ENCODE measurements at regions of chr3 and their contacts with region 1.

Region 1: DNA sequence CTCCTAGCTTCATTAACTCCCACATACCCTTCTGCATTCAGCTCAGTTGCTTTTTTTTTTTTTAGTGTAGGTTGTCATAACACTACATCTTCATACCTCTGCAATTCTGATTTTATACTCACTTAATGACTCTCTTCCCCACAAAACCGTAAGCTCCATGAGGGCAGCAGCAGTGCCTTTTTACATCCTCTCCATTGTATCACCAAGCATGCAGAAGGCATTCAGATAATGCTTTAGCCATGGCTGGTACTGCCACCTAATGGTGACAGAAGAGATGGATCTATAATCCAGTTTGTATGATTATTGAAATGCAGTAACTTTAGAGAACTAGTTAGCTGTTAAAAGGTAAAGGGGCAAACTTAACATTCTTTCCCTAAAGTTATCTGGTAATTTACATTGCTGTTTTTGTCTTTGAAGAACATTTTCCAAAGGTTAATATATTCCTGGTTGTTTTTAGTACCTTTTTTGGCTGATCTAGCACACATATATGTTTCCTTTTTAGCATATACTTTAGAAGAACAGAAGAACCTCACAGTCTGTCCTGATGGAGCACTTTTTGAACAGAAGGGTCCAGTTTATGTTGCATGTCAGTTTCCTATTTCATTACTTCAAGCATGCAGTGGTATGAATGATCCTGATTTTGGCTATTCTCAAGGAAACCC is 36.8 kb downstream of the ATP1B3 start:
- DNase-seq: peak in 6 of 7 donors; percentile 35 to 75 (median 59)
- H3K4me3 ChIP-seq: no peak overlapping the region
- H3K27ac ChIP-seq: no peak overlapping the region
- H3K4me1 ChIP-seq: no peaks in the 10 kb centered on the region
- H3K27me3 ChIP-seq: no peaks in the 10 kb centered on the region
- CTCF ChIP-seq: peak; percentile 51 to 82 (median 76)
- POLR2A ChIP-seq: no peak

Region 2: DNA sequence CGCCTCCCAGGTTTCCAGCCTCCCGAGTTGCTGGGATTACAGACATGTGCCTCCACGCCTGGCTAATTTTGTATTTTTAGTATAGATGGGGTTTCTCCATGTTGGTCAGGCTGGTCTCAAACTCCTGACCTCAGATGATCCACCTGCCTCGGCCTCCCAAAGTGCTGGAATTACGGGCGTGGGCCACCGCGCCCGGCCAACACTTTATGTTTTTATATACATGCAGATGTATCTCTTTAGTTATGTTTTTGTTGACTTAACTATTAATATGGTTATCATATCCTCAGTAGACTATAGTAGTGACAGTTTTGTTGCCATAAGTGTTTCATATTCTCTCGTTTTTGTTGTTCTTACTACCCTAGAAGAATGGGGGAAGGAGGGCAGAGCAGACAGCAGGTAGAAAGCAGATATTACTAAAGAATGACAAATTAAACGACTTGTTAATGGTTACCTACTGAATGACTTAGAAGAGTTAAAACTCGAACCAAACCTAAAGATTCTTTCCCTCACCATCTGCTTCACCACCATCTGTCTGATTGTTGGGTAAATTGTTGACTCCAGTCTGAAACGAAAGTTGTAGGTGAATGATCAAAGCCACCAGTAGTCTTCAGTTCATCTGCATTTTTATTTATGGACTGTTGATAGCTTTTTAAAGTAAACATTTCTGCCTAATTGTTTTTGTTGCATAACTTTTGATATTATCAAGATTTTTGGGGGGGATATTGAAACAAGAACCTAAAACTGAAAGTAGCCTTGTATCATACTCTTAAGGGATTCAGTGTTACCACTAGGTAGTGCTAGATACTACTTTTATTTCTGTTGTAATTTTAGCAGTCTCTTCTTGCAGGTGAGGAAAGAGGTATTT is 337.2 kb before region 1 on chr3:
- intact Hi-C with region 1: loop called in 1 of 2 experiments (anchors 10 kb)
- DNase-seq: no peak
- H3K4me3 ChIP-seq: no peak overlapping the region
- H3K27ac ChIP-seq: no peak overlapping the region
- H3K4me1 ChIP-seq: no peaks in the 10 kb centered on the region
- H3K27me3 ChIP-seq: no peaks in the 10 kb centered on the region
- CTCF ChIP-seq: peak; percentile 34 to 74 (median 60)
- POLR2A ChIP-seq: no peak

Region 3: DNA sequence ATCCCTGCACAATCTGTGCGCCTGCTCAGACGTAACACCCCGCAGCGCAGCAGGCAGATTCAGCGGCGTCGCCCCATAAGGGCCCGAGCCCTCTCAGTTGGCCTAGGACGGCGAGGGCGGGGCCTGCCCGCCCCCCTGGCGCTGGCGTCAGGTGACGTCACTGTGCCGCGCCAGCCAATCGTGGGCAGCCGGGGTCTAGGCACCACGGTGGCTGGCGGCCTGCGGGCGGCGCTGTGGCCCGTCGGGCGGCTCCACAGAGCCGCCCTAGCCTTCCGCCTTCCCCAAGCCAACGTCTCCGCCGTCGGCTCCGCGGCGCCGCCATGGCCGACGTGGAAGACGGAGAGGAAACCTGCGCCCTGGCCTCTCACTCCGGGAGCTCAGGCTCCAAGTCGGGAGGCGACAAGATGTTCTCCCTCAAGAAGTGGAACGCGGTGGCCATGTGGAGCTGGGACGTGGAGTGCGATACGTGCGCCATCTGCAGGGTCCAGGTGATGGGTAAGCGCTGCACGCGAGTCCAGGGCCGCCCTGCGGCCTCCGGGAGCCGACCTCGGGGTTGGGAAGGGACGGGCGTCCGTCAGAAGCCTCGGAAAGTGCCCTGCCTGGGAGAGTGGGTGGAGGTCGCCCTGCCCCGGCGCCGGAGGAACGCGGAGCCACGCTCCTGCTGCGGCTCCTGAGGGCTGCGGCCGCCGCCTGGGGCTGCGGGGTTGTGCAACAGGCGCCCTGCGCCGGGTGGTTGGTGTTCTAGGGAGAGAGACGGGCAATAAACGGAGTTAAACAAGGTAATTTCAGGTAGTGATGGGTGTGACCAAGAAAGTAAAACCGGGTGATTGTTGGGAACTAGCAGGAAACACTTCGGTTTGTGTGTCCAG is 175.0 kb before region 1 on chr3 and contains the start of gene RNF7:
- intact Hi-C with region 1: loop called in 1 of 2 experiments (anchors 5 kb)
- DNase-seq: peak; percentile 94 to 98 (median 96)
- H3K4me3 ChIP-seq: peak within 1 kb of the TSS; percentile 52 to 100 (median 74)
- H3K27ac ChIP-seq: peak within 1 kb of the TSS; percentile 86 to 95 (median 92)
- H3K4me1 ChIP-seq: peaks cover 14 to 33% of the 10 kb centered on the region in 2 donors
- H3K27me3 ChIP-seq: no peaks in the 10 kb centered on the region
- CTCF ChIP-seq: peak; percentile 67 to 98 (median 86)
- POLR2A ChIP-seq: peak; percentile 74 to 78
- total RNA-seq, gene RNF7: 87.4 to 200 (median 127) TPM

Measured in adrenal gland (tissue), 19 donors.